ENCODE measurements at regions of chr2 and their contacts with region 1.

Region 1: GRCh38 chr2:70190418-70191243 is at the start of gene C2orf42:
- DNase-seq: peak; percentile 99 to 100
- ATAC-seq: peak; percentile 97 to 98
- H3K4me3 ChIP-seq: peak within 1 kb of the TSS; percentile 75
- H3K27ac ChIP-seq: peak within 1 kb of the TSS; percentile 92 to 97
- H3K4me1 ChIP-seq: peaks cover 14% of the 10 kb centered on the region
- CTCF ChIP-seq: no peak
- EP300 ChIP-seq: no peak
- POLR2A ChIP-seq: peak; percentile 99
- RAD21 ChIP-seq: peak in 1 of 2 experiments; percentile 20; a peak in 1 of 5 replicates
- polyA plus RNA-seq, gene C2orf42: 10.4 and 14.8 TPM in 2 replicates

Region 2: GRCh38 chr2:69829256-69830046 is 361.2 kb before region 1 on chr2 and contains the start of gene GMCL1:
- CTCF ChIA-PET with region 1: no interaction called
- POLR2A ChIA-PET with region 1: no interaction called
- DNase-seq: peak; percentile 73 to 97
- ATAC-seq: peak; percentile 92 to 95
- H3K4me3 ChIP-seq: peak within 1 kb of the TSS; percentile 91
- H3K27ac ChIP-seq: peak within 1 kb of the TSS; percentile 86 to 88
- H3K4me1 ChIP-seq: peaks cover 15% of the 10 kb centered on the region
- CTCF ChIP-seq: no peak
- EP300 ChIP-seq: 0 out of 5 replicates have a peak, but pooled peaks of 1 of the 2 experiments have one; percentile 29
- POLR2A ChIP-seq: peak; percentile 72
- RAD21 ChIP-seq: no peak; a peak in 1 of 5 replicates
- polyA plus RNA-seq, gene GMCL1: 16.3 and 21.1 TPM in 2 replicates

Region 3: DNA sequence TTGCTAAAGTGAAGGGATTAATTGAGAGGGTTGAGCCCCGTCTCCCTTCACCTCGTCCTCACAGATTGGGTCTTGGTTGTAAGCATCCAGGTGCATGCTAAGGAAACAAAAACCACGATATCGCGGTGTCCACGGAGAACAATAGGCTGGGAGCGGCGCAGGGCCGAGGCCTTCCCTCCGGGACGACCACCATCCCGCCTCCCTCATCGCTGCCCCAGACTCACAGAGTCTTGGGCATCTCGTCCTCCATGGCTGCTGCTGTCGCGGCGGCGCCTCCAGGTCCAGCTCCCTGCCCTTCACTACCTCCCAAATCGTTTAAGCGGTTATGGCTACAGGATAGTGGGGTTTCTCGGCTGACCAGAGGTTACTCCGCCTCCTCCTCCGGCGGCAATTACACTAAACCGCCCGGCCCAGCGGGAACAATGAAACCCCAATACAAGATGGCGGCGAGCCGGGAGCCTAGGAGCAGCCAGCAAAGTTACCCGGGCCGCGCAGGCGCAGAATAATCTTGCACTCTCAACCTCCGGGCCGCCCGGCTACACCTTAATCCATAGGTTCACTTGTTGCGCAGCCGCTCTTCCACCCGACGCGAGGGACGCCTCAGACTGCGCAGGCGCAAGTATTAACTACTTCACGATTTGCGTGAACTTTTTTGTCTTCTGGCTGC is 57.7 kb after region 1 on chr2 and contains the start of gene TIA1:
- CTCF ChIA-PET with region 1: interaction called, 3 read pairs
- POLR2A ChIA-PET with region 1: interaction called, 19 read pairs
- DNase-seq: peak; percentile 97 to 99
- ATAC-seq: peak; percentile 94 to 97
- H3K4me3 ChIP-seq: peak within 1 kb of the TSS; percentile 70
- H3K27ac ChIP-seq: peak within 1 kb of the TSS; percentile 93 to 97
- H3K4me1 ChIP-seq: peaks cover 22% of the 10 kb centered on the region
- CTCF ChIP-seq: no peak
- EP300 ChIP-seq: no peak
- POLR2A ChIP-seq: peak; percentile 74
- RAD21 ChIP-seq: no peak
- polyA plus RNA-seq, gene TIA1: 148 and 173 TPM in 2 replicates

Region 4: GRCh38 chr2:70258532-70258874 is 67.9 kb after region 1 on chr2:
- CTCF ChIA-PET with region 1: no interaction called
- POLR2A ChIA-PET with region 1: interaction called, 12 read pairs
- DNase-seq: peak in 1 of 2 experiments; percentile 34
- ATAC-seq: peak in 1 of 2 experiments; percentile 36; a peak in 5 of 6 replicates
- H3K4me3 ChIP-seq: peak overlapping the region; percentile 66
- H3K27ac ChIP-seq: peak overlapping the region; percentile 86 to 93
- H3K4me1 ChIP-seq: peaks cover 5% of the 10 kb centered on the region; the same call in 1 of the 3 replicates
- CTCF ChIP-seq: no peak
- EP300 ChIP-seq: no peak
- POLR2A ChIP-seq: no peak
- RAD21 ChIP-seq: no peak

Region 5: DNA sequence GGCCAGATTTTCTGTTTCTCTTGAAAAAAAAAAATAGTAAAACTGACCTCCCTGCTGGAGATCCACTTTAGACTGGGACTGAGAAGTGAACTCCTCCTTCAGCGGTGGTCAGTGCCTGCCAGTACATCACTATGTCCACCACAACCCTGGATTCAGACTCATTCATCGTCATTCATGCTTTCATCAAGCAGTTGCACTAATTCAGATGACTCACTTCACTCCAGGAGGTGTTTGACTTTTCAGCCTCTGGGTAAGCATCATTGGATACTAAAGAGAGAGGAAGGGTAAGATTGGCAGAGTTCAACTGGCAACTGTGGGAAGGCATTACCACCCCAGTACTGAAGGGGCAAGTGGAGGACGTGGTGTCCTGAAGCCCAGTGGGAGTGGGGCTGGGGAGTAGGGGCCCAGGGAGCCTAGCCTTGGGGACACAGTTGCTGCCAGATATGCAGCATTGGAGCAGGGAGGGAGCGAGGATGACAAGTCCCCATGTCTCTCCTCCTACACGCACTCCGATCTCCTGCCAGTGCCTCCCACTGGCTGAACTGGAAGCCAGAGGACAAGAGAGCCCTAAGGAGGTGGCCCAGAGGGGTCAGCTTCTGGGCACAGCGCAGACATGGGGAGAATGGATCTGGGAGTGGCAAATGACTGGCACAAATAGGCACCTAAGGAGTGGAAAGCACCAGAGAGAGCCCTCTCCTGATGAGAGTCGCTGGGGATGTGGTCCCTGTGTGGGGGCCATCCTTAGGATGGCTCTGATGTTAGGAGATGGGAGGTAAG is 251.9 kb after region 1 on chr2:
- CTCF ChIA-PET with region 1: no interaction called
- POLR2A ChIA-PET with region 1: no interaction called
- DNase-seq: no peak
- ATAC-seq: no peak; a peak in 1 of 6 replicates
- H3K4me3 ChIP-seq: no peak overlapping the region
- H3K27ac ChIP-seq: no peak overlapping the region
- H3K4me1 ChIP-seq: no peaks in the 10 kb centered on the region
- CTCF ChIP-seq: no peak
- EP300 ChIP-seq: no peak
- POLR2A ChIP-seq: no peak
- RAD21 ChIP-seq: no peak